CD4-positive, alpha-beta memory T cell (primary cell): ENCODE measurements at regions of chr7 and their contacts with region 1.

Region 1: DNA sequence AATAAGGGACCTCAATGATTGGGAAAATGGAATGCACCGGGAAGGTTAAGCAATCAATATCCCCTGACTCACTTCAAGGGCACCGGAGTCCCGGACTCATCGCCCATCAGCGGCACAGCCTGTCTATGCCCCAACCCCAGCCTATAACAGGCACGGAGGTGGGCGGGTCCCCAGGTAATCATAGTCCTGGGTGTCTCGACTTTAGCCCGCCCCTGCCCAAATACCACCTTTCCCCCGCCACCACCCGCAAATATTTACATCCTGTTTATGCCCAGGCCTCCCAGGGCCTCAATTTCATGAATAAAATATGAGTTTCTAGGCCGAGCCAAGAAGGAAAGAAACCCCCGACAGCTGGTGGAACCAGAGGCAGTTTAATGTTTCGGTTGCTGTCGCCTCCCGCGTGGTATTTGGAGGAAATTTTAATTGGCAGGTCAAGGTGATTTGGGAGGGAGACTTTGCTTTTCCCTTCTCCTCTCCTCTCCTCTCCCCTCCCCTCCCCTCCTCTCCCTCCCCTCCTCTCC is 15.6 kb upstream of the RFC2 start:
- DNase-seq: peak; percentile 60 to 82 (median 66)
- H3K4me3 ChIP-seq: peak overlapping the region; percentile 57 to 90
- H3K4me3 Mint-ChIP-seq: peak overlapping the region; percentile 88 to 94 (median 92)
- H3K27ac ChIP-seq: peak overlapping the region; percentile 21
- H3K27ac Mint-ChIP-seq: peak overlapping the region in 6 of 7 donors; percentile 10 to 90 (median 62)
- H3K4me1 ChIP-seq: no peaks in the 10 kb centered on the region
- H3K4me1 Mint-ChIP-seq: peaks cover 4 to 7% (median 5%) of the 10 kb centered on the region in 4 donors
- H3K27me3 ChIP-seq: no peaks in the 10 kb centered on the region
- H3K27me3 Mint-ChIP-seq: peaks cover 0 to 9% of the 10 kb centered on the region in 2 donors

Region 2: GRCh38 chr7:74289018-74289658 is 19.3 kb after region 1 on chr7 and contains the start of gene CLIP2:
- CTCF ChIA-PET with region 1: interaction called, 8 read pairs
- POLR2A ChIA-PET with region 1: interaction called, 17 read pairs
- intact Hi-C with region 1: loop called (anchors 1 kb)
- DNase-seq: peak; percentile 67 to 73 (median 71)
- H3K4me3 ChIP-seq: peak within 1 kb of the TSS; percentile 60 to 65
- H3K4me3 Mint-ChIP-seq: peak within 1 kb of the TSS; percentile 87 to 97 (median 90)
- H3K27ac ChIP-seq: no peak within 1 kb of the TSS
- H3K27ac Mint-ChIP-seq: peak within 1 kb of the TSS; percentile 71 to 92 (median 85)
- H3K4me1 ChIP-seq: peaks cover 24% of the 10 kb centered on the region
- H3K4me1 Mint-ChIP-seq: peaks cover 15 to 35% (median 18%) of the 10 kb centered on the region in 4 donors
- H3K27me3 ChIP-seq: no peaks in the 10 kb centered on the region
- H3K27me3 Mint-ChIP-seq: peaks cover 3 to 7% of the 10 kb centered on the region in 2 donors
- total RNA-seq, gene CLIP2: 3.0 to 5.7 TPM